BJ (cell line): ENCODE measurements at regions of chr19 and their contacts with region 1.

Region 1: GRCh38 chr19:55452749-55453346 is 8.6 kb downstream of the ISOC2 start:
- DNase-seq: peak; percentile 25
- H3K4me3 ChIP-seq: no peak overlapping the region
- H3K27me3 ChIP-seq: peaks cover 16% of the 10 kb centered on the region
- CTCF ChIP-seq: 0 out of 2 replicates have a peak, but pooled peaks have one; percentile 27

Region 2: DNA sequence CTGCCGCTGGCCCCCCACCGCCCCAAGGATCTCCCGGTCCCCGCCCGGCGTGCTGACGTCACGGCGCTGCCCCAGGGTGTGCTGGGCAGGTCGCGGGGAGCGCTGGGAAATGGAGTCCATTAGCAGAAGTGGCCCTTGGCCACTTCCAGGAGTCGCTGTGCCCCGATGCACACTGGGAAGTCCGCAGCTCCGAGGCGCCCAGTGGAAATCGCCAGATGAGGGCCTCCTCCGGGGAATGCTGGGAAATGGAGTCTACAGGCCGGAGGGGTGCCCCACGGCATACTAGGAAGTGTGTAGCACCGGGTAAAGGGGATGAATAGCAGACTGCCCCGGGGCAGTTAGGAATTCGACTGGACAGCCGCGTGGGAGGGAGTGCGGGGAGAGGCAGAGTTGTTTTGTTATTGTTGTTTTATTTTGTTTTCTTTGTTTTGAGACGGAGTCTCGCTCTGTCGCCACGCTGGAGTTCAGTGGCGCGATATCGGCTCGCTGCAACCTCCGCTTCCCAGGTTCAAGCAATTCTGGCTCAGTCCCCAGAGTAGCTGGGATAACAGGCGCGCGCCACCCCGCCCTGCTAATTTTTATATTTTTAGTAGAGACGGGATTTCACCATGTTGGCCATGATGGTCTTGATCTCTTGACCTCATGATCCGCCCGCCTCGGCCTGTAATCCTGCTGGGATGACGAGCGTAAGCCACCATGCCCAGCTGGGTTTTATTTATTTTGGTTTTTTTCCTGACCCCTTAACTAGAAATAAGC is 335.0 kb before region 1 on chr19 and contains the start of gene PPP1R12C:
- CTCF ChIA-PET with region 1: no interaction called
- POLR2A ChIA-PET with region 1: interaction called, 10 read pairs
- DNase-seq: peak; percentile 94
- H3K4me3 ChIP-seq: peak within 1 kb of the TSS; percentile 97
- H3K27me3 ChIP-seq: no peaks in the 10 kb centered on the region; the same call in 1 of the 2 replicates
- CTCF ChIP-seq: no peak
- polyA plus RNA-seq, gene PPP1R12C: 36.0 and 50.8 TPM in 2 replicates

Region 3: DNA sequence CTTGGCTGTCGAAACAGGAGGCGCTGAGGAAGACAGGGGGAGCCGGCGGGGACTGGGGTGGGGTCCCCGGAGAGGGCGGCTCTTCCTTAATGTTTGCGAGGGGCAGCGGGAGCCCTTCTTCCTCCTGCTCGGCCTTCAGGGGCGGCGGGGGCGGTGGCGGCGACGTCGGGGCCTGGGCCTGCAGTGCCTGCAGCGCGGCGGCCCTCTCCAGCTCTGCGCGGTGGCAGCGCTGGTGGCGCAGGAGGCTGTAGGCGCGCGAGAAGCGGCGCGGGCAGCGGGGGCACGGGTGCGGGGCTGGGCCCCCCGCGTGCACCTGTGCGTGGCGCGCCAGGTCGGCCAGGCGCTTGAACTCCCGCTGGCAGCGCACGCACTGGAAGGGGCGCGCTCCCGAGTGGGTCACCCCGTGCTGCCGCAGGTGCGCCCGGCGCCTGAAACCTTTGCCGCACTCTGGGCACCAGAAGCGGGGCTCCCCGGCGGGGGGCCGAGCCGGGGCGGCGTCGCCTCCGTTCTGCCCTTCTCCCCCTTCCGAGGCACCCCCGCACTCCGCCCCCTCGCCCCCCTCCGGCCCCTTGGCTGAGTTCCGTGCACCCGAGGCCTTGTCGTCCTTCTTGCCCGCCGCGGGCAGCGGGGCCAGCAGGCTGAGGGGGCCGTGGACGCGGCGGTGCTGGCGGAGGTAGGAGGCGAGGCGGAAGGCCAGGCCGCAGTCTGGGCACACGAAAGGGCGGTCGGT is 125.3 kb after region 1 on chr19:
- CTCF ChIA-PET with region 1: no interaction called
- POLR2A ChIA-PET with region 1: no interaction called
- DNase-seq: no peak
- H3K4me3 ChIP-seq: no peak overlapping the region
- H3K27me3 ChIP-seq: no peaks in the 10 kb centered on the region
- CTCF ChIP-seq: no peak